Cardiac septum (tissue), 1 donor: ENCODE measurements at regions of chr5 and their contacts with region 1.

Region 1: GRCh38 chr5:125484742-125485641 is 738.6 kb upstream of the ZNF608 start:
- DNase-seq: peak; percentile 75

Region 2: GRCh38 chr5:125595095-125595494 is 110.1 kb after region 1 on chr5:
- intact Hi-C with region 1: loop called (anchors 10 kb)
- DNase-seq: no peak